ENCODE measurements at regions of chr2 and their contacts with region 1.

Region 1: DNA sequence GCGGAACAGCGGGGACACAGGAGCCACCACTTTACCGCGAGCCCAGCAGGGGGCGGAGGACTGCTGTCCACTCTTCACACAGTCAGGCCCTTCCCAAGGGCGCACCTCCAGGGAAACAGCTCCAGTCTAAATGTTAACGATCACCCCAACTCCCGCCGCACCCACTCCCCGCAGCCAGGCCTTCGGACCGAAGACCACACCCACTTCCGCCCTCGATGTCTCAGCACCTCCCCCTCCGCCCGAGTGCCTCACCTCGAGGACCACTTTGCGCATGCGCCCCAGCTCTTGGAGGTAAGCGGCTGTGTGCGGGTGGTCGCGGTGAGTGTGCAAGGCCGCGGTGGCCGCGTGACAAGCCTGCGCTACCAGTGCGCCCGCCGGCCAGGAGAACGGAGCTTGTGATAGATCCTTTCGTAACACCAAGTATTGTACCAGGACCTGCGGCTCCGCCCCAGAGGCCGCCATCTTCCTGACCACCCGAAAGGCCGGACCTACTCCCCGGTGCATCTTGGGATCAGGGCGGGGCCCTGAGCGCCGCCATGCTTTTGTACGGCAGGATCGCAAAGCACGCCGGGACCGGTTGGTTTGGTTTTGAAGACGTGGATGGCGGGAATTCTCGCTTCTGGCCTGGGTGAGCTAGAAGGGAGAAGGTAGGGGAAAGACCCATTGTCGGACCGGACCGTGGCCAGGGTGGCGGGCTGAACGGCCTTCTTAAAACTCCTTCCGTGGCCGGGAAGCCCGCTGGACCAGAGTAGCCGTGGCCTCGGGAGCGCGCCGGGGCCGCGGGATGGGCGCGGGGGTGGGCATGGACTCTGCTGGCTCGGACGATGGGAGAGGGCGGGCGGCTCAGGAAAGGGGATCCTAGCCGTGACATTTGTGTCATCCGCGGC is at the starts of genes CENPO and PTRHD1:
- DNase-seq: peak; percentile 92 to 95 (median 94)
- H3K4me3 ChIP-seq: peak within 1 kb of the TSS; percentile 66 to 86 (median 80)
- H3K4me3 Mint-ChIP-seq: peak within 1 kb of the TSS; percentile 88 to 94
- H3K27ac ChIP-seq: peak within 1 kb of the TSS; percentile 88 to 96
- H3K27ac Mint-ChIP-seq: peak within 1 kb of the TSS; percentile 97 to 100 (median 99)
- H3K4me1 ChIP-seq: peaks cover 14 to 21% of the 10 kb centered on the region in 2 donors
- H3K4me1 Mint-ChIP-seq: peaks cover 21% of the 10 kb centered on the region
- H3K27me3 ChIP-seq: no peaks in the 10 kb centered on the region
- H3K27me3 Mint-ChIP-seq: no peaks in the 10 kb centered on the region
- CTCF ChIP-seq: peak; percentile 52
- polyA plus RNA-seq, gene CENPO: 1.6 to 2.6 (median 2.3) TPM
- polyA plus RNA-seq, gene PTRHD1: 20.3 to 86.2 (median 78.6) TPM

Region 2: DNA sequence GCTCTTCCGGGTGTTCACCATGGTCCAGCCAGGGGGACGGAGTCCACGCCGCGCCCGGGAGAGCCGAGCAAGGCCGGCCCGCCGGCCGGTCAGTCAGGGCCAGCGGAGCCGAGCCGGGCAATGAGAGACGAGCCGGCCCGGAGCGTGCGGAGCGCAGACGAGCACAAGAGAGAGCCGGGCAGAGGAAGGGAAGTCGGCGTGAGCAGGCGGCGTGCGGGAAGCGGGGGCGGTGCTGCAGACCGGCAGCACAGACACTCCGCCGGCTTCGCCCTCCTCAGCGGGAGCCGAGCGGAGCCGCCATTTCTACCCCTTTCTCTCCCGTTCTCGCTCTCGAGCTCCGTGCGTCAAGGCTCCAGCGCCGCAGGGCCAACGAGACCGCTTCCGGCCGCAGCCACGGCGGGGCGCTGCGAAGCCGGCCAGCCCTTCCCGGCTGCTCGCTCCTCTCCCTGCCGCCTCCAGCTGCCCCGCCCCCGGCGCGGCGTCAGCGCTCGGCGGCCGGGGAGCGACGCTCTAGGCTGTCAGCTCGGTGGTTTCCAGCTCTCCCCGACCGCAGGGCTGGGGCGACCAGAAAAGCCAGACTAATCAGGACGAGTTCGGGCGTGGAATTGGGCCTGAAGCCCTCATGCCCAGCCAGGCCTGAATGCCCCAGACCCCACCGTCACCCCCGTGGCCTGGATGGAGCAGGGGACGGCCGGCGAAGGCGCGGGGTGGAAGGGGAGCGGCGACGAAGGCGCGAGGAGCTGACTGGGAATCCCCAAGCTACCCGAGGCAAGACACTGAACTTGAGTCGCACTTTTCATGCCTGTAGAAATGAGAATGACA is 866.2 kb before region 1 on chr2 and contains the start of gene ATAD2B:
- intact Hi-C with region 1: loop called in 1 of 2 experiments (anchors 10 kb)
- DNase-seq: peak; percentile 91 to 94 (median 93)
- H3K4me3 ChIP-seq: peak within 1 kb of the TSS; percentile 90 to 97 (median 90)
- H3K4me3 Mint-ChIP-seq: peak within 1 kb of the TSS; percentile 95 to 97
- H3K27ac ChIP-seq: peak within 1 kb of the TSS; percentile 98 to 99
- H3K27ac Mint-ChIP-seq: peak within 1 kb of the TSS; percentile 99 to 100 (median 99)
- H3K4me1 ChIP-seq: peaks cover 20 to 33% of the 10 kb centered on the region in 2 donors
- H3K4me1 Mint-ChIP-seq: peaks cover 43% of the 10 kb centered on the region
- H3K27me3 ChIP-seq: no peaks in the 10 kb centered on the region
- H3K27me3 Mint-ChIP-seq: no peaks in the 10 kb centered on the region
- CTCF ChIP-seq: peak; percentile 82
- polyA plus RNA-seq, gene ATAD2B: 4.9 to 12.1 (median 7.2) TPM

Region 3: GRCh38 chr2:24971536-24972314 is 178.6 kb after region 1 on chr2 and contains the start of gene DNAJC27:
- intact Hi-C with region 1: loop called in 1 of 2 experiments (anchors 5 kb)
- DNase-seq: peak; percentile 95 to 97 (median 96)
- H3K4me3 ChIP-seq: peak within 1 kb of the TSS; percentile 64 to 84 (median 76)
- H3K4me3 Mint-ChIP-seq: peak within 1 kb of the TSS; percentile 92 to 97
- H3K27ac ChIP-seq: peak within 1 kb of the TSS; percentile 95 to 96
- H3K27ac Mint-ChIP-seq: peak within 1 kb of the TSS; percentile 99 to 100 (median 100)
- H3K4me1 ChIP-seq: peaks cover 6 to 26% of the 10 kb centered on the region in 2 donors
- H3K4me1 Mint-ChIP-seq: peaks cover 13% of the 10 kb centered on the region
- H3K27me3 ChIP-seq: no peaks in the 10 kb centered on the region
- H3K27me3 Mint-ChIP-seq: no peaks in the 10 kb centered on the region
- CTCF ChIP-seq: no peak
- polyA plus RNA-seq, gene DNAJC27: 0.86 to 2.8 (median 2.2) TPM

Region 4: GRCh38 chr2:25041928-25042320 is 248.8 kb after region 1 on chr2 and contains the start of gene EFR3B:
- intact Hi-C with region 1: loop called in 1 of 2 experiments (anchors 10 kb)
- DNase-seq: peak; percentile 90 to 92 (median 91)
- H3K4me3 ChIP-seq: peak within 1 kb of the TSS; percentile 38 to 81 (median 40)
- H3K4me3 Mint-ChIP-seq: peak within 1 kb of the TSS; percentile 77 to 92
- H3K27ac ChIP-seq: no peak within 1 kb of the TSS
- H3K27ac Mint-ChIP-seq: peak within 1 kb of the TSS in 3 of 7 donors; percentile 31 to 54 (median 54)
- H3K4me1 ChIP-seq: peaks cover 18 to 20% of the 10 kb centered on the region in 2 donors
- H3K4me1 Mint-ChIP-seq: peaks cover 24% of the 10 kb centered on the region
- H3K27me3 ChIP-seq: peaks cover 28 to 52% of the 10 kb centered on the region in 2 donors
- H3K27me3 Mint-ChIP-seq: peaks cover 53 to 73% (median 58%) of the 10 kb centered on the region in 3 donors
- CTCF ChIP-seq: no peak
- polyA plus RNA-seq, gene EFR3B: not detected

Region 5: DNA sequence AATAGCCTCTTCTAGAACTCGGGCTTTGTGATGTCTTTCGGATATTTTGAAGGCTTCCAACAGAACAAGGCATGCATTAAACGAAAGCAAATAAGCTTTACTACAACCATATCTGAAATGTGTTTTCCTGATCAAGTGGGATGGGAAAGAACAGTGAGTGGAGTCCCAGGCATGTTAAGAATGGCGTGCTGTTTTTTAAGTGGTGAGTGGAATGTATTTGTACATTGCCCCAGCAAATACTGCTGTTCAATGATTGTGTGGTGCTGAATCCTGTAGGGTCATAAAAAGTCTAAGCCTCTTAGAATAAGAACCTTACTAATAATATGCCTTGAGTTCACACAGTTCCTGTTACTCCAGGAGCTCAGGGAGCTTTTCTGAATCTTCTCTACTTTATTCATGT is 322.8 kb after region 1 on chr2:
- intact Hi-C with region 1: no loop called
- DNase-seq: no peak
- H3K4me3 ChIP-seq: no peak overlapping the region
- H3K4me3 Mint-ChIP-seq: no peak overlapping the region
- H3K27ac ChIP-seq: no peak overlapping the region
- H3K27ac Mint-ChIP-seq: no peak overlapping the region
- H3K4me1 ChIP-seq: no peaks in the 10 kb centered on the region
- H3K4me1 Mint-ChIP-seq: no peaks in the 10 kb centered on the region
- H3K27me3 ChIP-seq: no peaks in the 10 kb centered on the region
- H3K27me3 Mint-ChIP-seq: peaks cover 1 to 3% (median 2%) of the 10 kb centered on the region in 3 donors
- CTCF ChIP-seq: no peak

Region 6: DNA sequence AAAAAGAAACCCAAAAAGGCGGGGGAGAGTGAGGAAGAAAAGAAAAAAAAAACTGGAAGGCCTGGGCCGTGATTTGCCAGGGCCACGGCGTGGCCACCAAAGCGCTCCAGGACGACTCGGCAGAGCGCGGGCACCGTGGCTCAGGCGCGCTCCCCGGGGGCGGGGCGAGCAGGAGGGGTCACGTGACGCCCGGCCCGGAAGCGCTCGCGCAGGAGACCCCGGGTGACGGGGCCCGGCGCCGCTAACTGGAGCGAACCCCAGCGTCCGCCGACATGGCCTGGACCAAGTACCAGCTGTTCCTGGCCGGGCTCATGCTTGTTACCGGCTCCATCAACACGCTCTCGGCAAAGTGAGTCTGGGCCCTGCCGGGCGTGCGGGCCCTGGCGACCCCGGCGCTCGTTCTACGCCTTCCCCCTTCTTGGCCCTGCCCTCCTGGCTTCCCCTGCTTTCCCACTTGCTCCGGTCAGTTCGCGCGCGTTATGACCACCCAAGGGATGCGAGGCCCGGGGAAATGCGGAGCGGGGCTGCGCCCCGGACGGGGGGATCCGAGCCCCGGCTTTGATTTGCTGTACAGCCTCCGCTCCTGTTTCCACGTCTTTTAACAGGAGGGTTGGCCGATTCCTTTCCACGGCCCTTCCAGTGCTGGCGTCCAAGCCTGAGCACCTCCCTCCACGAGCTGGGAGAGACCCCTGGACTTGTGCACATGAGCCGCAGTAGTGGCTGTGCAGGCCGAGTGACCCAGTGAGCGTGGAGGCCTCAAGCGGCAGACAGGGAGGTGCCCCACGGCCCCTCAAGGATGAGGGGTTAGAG is 1971.2 kb after region 1 on chr2 and contains the start of gene SLC35F6:
- intact Hi-C with region 1: loop called in 1 of 2 experiments (anchors 10 kb)
- DNase-seq: peak; percentile 77 to 81 (median 78)
- H3K4me3 ChIP-seq: peak within 1 kb of the TSS; percentile 66 to 98 (median 94)
- H3K4me3 Mint-ChIP-seq: peak within 1 kb of the TSS; percentile 97 to 99
- H3K27ac ChIP-seq: peak within 1 kb of the TSS; percentile 75 to 91
- H3K27ac Mint-ChIP-seq: peak within 1 kb of the TSS; percentile 88 to 96 (median 94)
- H3K4me1 ChIP-seq: peaks cover 51 to 53% of the 10 kb centered on the region in 2 donors
- H3K4me1 Mint-ChIP-seq: peaks cover 49% of the 10 kb centered on the region
- H3K27me3 ChIP-seq: peaks cover 0 to 5% of the 10 kb centered on the region in 2 donors
- H3K27me3 Mint-ChIP-seq: peaks cover 1 to 15% (median 8%) of the 10 kb centered on the region in 3 donors
- CTCF ChIP-seq: no peak
- polyA plus RNA-seq, gene SLC35F6: 11.3 to 22.2 (median 15.1) TPM

Measured in CD14-positive monocyte (primary cell).